IMR-90 (cell line): ENCODE measurements at regions of chr4 and their contacts with region 1.

Region 1: GRCh38 chr4:167021545-167022155 is 212.6 kb downstream of the SPOCK3 start:
- DNase-seq: peak; percentile 51
- ATAC-seq: peak; percentile 69
- H3K4me3 ChIP-seq: no peak overlapping the region
- H3K27ac ChIP-seq: no peak overlapping the region
- H3K4me1 ChIP-seq: no peaks in the 10 kb centered on the region
- H3K27me3 ChIP-seq: no peaks in the 10 kb centered on the region
- CTCF ChIP-seq: peak; percentile 73
- POLR2A ChIP-seq: no peak
- RAD21 ChIP-seq: peak; percentile 60

Region 2: DNA sequence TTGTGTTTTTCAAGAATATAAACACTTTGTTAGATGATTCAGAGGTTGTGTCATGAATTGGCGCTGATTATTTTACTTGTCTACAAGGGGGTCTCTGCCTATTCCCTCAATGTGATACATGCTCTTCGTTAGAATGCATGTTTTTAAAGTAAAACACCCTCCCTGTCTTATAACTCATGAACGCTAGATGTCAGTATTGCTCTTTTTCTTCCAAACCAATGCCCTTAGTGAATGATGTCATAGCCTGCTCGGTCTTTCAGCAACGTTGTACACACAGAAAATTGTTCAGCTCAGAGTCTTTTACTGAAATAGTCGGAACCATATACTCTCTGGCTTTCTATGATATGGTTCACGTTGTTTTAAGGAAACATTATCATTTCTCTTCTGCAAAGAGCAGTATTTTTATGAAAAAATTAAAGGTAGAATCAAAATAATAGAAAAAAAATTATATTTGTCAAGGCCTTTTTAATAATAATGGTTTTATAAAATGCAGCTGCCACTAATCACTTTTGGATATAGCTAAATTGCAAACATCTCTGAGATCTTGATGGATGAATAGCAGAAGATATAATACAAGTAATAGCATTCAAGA is 855.7 kb before region 1 on chr4:
- CTCF ChIA-PET with region 1: no interaction called
- POLR2A ChIA-PET with region 1: no interaction called
- dilution Hi-C with region 1: no loop called
- in situ Hi-C with region 1: no loop called
- intact Hi-C with region 1: loop called (anchors 5 kb)
- DNase-seq: peak; percentile 68
- ATAC-seq: peak; percentile 86
- H3K4me3 ChIP-seq: no peak overlapping the region
- H3K27ac ChIP-seq: no peak overlapping the region
- H3K4me1 ChIP-seq: no peaks in the 10 kb centered on the region
- H3K27me3 ChIP-seq: no peaks in the 10 kb centered on the region
- CTCF ChIP-seq: peak; percentile 72
- POLR2A ChIP-seq: no peak
- RAD21 ChIP-seq: peak; percentile 77

Region 3: GRCh38 chr4:167079762-167080161 is 58.1 kb after region 1 on chr4:
- CTCF ChIA-PET with region 1: no interaction called
- POLR2A ChIA-PET with region 1: no interaction called
- dilution Hi-C with region 1: no loop called
- in situ Hi-C with region 1: no loop called
- intact Hi-C with region 1: no loop called
- DNase-seq: no peak
- ATAC-seq: no peak
- H3K4me3 ChIP-seq: no peak overlapping the region
- H3K27ac ChIP-seq: no peak overlapping the region
- H3K4me1 ChIP-seq: no peaks in the 10 kb centered on the region
- H3K27me3 ChIP-seq: no peaks in the 10 kb centered on the region
- CTCF ChIP-seq: no peak
- POLR2A ChIP-seq: no peak
- RAD21 ChIP-seq: no peak

Region 4: GRCh38 chr4:167622481-167623246 is 601.0 kb after region 1 on chr4:
- CTCF ChIA-PET with region 1: no interaction called
- POLR2A ChIA-PET with region 1: no interaction called
- dilution Hi-C with region 1: no loop called
- in situ Hi-C with region 1: no loop called
- intact Hi-C with region 1: loop called (anchors 1 kb)
- DNase-seq: peak; percentile 19
- ATAC-seq: peak; percentile 79
- H3K4me3 ChIP-seq: no peak overlapping the region
- H3K27ac ChIP-seq: no peak overlapping the region
- H3K4me1 ChIP-seq: no peaks in the 10 kb centered on the region
- H3K27me3 ChIP-seq: no peaks in the 10 kb centered on the region
- CTCF ChIP-seq: peak; percentile 57
- POLR2A ChIP-seq: no peak
- RAD21 ChIP-seq: peak; percentile 46

Region 5: DNA sequence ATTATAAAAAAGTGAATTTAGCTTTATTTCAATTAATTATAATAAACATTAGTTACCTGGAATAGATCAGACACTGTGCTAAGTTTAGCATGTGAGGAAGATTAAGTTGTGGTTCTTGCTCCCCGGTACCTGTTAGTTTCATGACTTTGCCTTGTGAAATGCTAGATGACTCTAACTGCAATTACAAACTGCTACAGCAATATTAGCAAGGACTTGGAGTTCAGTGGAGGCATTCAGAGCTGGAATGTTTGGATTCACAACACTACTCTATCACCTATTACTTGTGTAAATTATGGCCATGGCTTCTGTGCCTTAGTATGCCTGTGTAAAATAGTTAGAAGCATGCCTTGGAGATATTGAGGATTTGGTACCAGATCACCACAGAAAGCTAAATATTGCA is 1049.3 kb after region 1 on chr4:
- CTCF ChIA-PET with region 1: no interaction called
- POLR2A ChIA-PET with region 1: no interaction called
- dilution Hi-C with region 1: no loop called
- in situ Hi-C with region 1: loop called (anchors 5 kb)
- intact Hi-C with region 1: no loop called
- DNase-seq: no peak
- ATAC-seq: no peak
- H3K4me3 ChIP-seq: no peak overlapping the region
- H3K27ac ChIP-seq: no peak overlapping the region
- H3K4me1 ChIP-seq: no peaks in the 10 kb centered on the region
- H3K27me3 ChIP-seq: no peaks in the 10 kb centered on the region
- CTCF ChIP-seq: no peak
- POLR2A ChIP-seq: no peak
- RAD21 ChIP-seq: no peak

Region 6: DNA sequence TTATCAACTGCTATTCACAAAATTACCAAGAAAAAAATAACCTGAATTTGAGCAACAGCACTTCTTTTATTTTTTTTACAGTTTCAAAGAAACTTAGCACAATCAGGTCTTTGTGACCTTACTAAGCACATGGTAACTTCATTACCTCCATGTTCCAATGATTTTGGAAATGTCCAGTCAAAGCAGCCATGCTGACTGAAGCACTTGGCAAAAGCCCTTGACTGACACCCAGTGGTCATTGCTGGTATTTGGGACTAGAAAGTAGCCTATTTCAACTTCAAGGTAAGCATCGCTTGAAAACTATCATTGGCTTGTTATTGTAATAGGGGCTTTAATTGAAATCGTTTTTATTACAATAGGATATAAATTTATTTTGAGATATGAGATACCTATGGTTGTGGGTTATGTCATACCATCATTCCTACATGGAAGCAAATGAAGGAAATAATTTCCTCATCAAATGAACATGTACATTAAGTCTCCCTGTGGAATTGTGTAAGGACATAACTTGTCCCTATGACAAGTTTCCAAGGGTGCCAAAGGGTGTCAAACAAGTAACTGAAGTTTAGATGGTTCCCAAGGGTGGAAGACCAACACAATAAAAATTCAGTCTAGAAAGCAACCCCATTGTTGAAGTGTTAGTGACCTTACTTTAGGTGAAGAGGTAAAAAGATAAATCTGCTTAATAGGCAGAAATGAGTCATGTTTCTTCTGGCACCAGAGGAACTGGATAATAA is 1055.5 kb after region 1 on chr4:
- CTCF ChIA-PET with region 1: interaction called, 3 read pairs
- POLR2A ChIA-PET with region 1: no interaction called
- dilution Hi-C with region 1: no loop called
- in situ Hi-C with region 1: loop called (anchors 5 kb)
- intact Hi-C with region 1: loop called (anchors 1 kb)
- DNase-seq: peak; percentile 71
- ATAC-seq: peak; percentile 81
- H3K4me3 ChIP-seq: no peak overlapping the region
- H3K27ac ChIP-seq: no peak overlapping the region
- H3K4me1 ChIP-seq: no peaks in the 10 kb centered on the region
- H3K27me3 ChIP-seq: no peaks in the 10 kb centered on the region
- CTCF ChIP-seq: peak; percentile 93
- POLR2A ChIP-seq: no peak
- RAD21 ChIP-seq: peak; percentile 93

Region 7: DNA sequence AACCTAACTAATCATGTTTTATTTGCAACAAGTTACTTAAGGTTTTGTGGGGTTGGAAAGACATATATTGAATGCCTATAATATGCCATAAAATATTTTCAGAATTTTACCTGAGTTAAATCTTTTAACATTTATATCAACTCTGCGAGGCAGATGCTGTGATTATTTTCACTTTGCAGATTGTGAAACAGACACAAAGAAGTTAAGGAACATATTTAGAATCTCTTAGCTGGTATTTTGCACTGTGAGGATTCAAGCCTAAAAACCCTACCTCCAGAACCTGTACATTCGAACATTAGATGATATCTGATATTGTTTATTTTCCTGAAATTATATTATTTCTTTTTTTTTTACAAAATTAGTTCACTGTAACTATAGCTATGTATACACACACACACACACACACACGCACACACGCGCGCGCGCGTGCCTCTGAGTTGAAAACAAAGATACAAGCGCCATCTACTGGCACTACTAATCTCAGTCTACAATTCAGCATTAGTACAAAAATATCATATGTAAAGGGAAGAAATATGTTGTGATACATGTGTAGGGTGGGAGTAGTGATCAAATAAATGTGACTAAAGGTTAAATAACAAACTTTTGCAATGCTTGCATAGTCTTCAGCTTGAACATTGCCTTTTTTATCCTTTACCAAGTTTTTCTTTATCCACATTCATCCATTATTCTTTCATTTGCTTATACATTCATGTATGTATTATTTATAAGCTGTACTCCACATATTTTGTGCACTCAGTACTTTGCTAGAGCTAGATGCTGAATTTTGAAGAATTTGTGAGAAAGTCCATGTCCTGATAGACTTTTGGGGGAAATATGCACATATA is 1132.2 kb after region 1 on chr4:
- CTCF ChIA-PET with region 1: interaction called, 4 read pairs
- POLR2A ChIA-PET with region 1: no interaction called
- dilution Hi-C with region 1: no loop called
- in situ Hi-C with region 1: loop called (anchors 5 kb)
- intact Hi-C with region 1: loop called (anchors 1 kb)
- DNase-seq: peak; percentile 83
- ATAC-seq: peak; percentile 91
- H3K4me3 ChIP-seq: peak overlapping the region; percentile 24; the same call in 1 of the 2 replicates
- H3K27ac ChIP-seq: no peak overlapping the region
- H3K4me1 ChIP-seq: no peaks in the 10 kb centered on the region
- H3K27me3 ChIP-seq: no peaks in the 10 kb centered on the region
- CTCF ChIP-seq: peak; percentile 87
- POLR2A ChIP-seq: no peak
- RAD21 ChIP-seq: peak; percentile 83